Activated naive CD4-positive, alpha-beta T cell treated with anti-CD3 and anti-CD28 coated beads for 36 hours (primary cell): ENCODE measurements at regions of chr4 and their contacts with region 1.

Region 1: GRCh38 chr4:110193822-110194761 is 4.3 kb downstream of the ELOVL6 start:
- DNase-seq: peak; percentile 92
- H3K4me3 Mint-ChIP-seq: peak overlapping the region; percentile 54
- H3K27ac Mint-ChIP-seq: peak overlapping the region; percentile 95
- H3K4me1 Mint-ChIP-seq: peaks cover 31% of the 10 kb centered on the region
- H3K27me3 Mint-ChIP-seq: no peaks in the 10 kb centered on the region

Region 2: DNA sequence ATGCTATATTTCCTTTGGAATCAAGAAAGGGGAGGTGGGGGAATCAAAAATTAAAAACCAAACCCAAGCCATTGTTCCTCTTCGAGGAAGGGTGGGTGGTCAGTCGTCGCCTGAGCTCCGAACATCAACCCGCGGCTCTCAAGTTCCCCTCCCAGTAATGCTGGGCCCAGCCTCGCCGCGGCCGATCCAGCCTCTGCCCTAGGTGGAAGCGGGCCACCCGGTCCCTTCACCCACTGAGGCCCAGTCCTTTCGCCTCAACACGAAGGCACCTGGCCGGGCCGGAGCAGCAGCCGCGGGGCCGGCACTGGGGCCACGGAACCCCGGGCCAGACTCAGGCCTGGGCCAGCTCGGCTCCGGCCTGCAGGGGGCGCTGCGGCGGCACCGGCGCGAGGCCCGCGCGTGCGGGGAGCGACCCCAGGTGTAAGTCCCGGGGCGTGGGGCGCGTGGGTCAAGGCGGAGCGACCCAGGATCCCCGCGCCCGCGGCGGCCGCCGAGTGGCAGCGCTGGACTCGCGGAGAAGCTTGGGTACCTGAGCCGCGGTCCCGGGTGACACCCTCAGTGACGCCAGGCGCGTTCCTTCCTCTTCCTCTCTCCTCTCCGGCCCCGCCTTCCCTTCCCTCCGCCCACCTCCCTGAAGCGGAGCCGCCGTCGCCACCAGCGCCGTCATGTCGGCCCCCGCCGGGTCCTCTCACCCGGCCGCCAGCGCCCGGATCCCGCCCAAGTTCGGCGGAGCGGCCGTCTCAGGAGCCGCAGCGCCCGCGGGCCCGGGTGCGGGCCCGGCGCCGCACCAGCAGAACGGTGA is 760.7 kb before region 1 on chr4 and contains the start of gene SEC24B:
- CTCF ChIA-PET with region 1: no interaction called
- intact Hi-C with region 1: loop called (anchors 5 kb)
- DNase-seq: peak; percentile 92
- H3K4me3 Mint-ChIP-seq: peak within 1 kb of the TSS; percentile 82
- H3K27ac Mint-ChIP-seq: peak within 1 kb of the TSS; percentile 85
- H3K4me1 Mint-ChIP-seq: peaks cover 62% of the 10 kb centered on the region
- H3K27me3 Mint-ChIP-seq: no peaks in the 10 kb centered on the region
- total RNA-seq, gene SEC24B: 20.6 to 21.1 TPM

Region 3: GRCh38 chr4:109702950-109703663 is 491.0 kb before region 1 on chr4 and contains the start of gene CASP6:
- CTCF ChIA-PET with region 1: no interaction called
- intact Hi-C with region 1: loop called (anchors 10 kb)
- DNase-seq: peak; percentile 76
- H3K4me3 Mint-ChIP-seq: peak within 1 kb of the TSS; percentile 86
- H3K27ac Mint-ChIP-seq: peak within 1 kb of the TSS; percentile 82
- H3K4me1 Mint-ChIP-seq: peaks cover 28% of the 10 kb centered on the region
- H3K27me3 Mint-ChIP-seq: no peaks in the 10 kb centered on the region
- total RNA-seq, gene CASP6: 11.5 to 12.1 TPM

Region 4: GRCh38 chr4:110049951-110050925 is 143.9 kb before region 1 on chr4:
- CTCF ChIA-PET with region 1: interaction called, 6 read pairs
- intact Hi-C with region 1: loop called (anchors 1 kb)
- DNase-seq: peak; percentile 71
- H3K4me3 Mint-ChIP-seq: no peak overlapping the region
- H3K27ac Mint-ChIP-seq: no peak overlapping the region
- H3K4me1 Mint-ChIP-seq: no peaks in the 10 kb centered on the region
- H3K27me3 Mint-ChIP-seq: no peaks in the 10 kb centered on the region

Region 5: GRCh38 chr4:110268352-110268751 is 74.3 kb after region 1 on chr4:
- CTCF ChIA-PET with region 1: no interaction called
- intact Hi-C with region 1: loop called (anchors 2 kb)
- DNase-seq: peak; percentile 33
- H3K4me3 Mint-ChIP-seq: no peak overlapping the region
- H3K27ac Mint-ChIP-seq: no peak overlapping the region
- H3K4me1 Mint-ChIP-seq: peaks cover 3% of the 10 kb centered on the region
- H3K27me3 Mint-ChIP-seq: peaks cover 5% of the 10 kb centered on the region

Region 6: GRCh38 chr4:112145326-112145819 is 1951.3 kb after region 1 on chr4 and contains the start of gene FAM241A:
- CTCF ChIA-PET with region 1: no interaction called
- intact Hi-C with region 1: loop called (anchors 5 kb)
- DNase-seq: peak; percentile 89
- H3K4me3 Mint-ChIP-seq: peak within 1 kb of the TSS; percentile 91
- H3K27ac Mint-ChIP-seq: peak within 1 kb of the TSS; percentile 93
- H3K4me1 Mint-ChIP-seq: peaks cover 30% of the 10 kb centered on the region
- H3K27me3 Mint-ChIP-seq: no peaks in the 10 kb centered on the region
- total RNA-seq, gene FAM241A: 2.2 to 2.5 TPM